WTC11 (cell line): ENCODE measurements at regions of chr5 and their contacts with region 1.

Region 1: GRCh38 chr5:96344678-96345577 is 88.1 kb downstream of the PCSK1 start:
- DNase-seq: no peak
- ATAC-seq: peak; percentile 89
- H3K4me3 Mint-ChIP-seq: no peak overlapping the region
- H3K27ac Mint-ChIP-seq: no peak overlapping the region
- H3K4me1 Mint-ChIP-seq: peaks cover 6% of the 10 kb centered on the region
- H3K27me3 Mint-ChIP-seq: no peaks in the 10 kb centered on the region
- CTCF ChIP-seq: 0 out of 2 replicates have a peak, but pooled peaks have one; percentile 19

Region 2: GRCh38 chr5:96247097-96247701 is 97.7 kb before region 1 on chr5:
- CTCF ChIA-PET with region 1: no interaction called
- POLR2A ChIA-PET with region 1: no interaction called
- DNase-seq: no peak
- ATAC-seq: peak; percentile 59
- H3K4me3 Mint-ChIP-seq: no peak overlapping the region
- H3K27ac Mint-ChIP-seq: no peak overlapping the region
- H3K4me1 Mint-ChIP-seq: peaks cover 5% of the 10 kb centered on the region
- H3K27me3 Mint-ChIP-seq: no peaks in the 10 kb centered on the region; the same call in 1 of the 2 replicates
- CTCF ChIP-seq: no peak

Region 3: DNA sequence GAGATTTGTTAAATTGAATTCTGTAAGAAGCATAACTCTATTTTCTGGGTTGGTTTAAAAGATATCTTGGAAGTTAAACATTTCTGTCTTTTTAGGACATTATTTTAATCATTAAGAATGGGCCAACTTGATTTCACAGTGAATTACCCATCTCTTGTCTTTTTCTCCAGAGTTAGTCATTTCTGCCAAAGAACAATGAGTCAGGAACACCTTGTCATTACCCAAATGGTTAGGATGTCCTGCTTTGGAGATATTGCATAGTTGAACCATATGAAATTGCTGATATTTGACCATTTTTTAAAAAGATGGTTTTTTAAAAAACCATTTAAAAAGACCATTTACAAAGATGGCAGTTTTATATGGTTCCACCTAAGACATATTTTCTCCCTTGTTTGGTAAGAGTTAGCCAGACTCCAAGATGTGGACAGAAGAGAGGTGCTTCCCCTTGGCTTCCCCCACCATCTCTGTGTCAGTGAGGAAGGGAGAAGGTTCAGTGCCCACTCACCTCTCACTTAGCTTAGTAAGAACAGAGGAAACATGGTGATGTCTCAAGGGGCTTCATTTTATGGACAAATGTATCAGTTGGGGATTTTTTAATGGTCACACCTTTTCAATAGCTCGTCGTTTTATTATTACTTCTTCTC is 14.9 kb before region 1 on chr5:
- CTCF ChIA-PET with region 1: no interaction called
- POLR2A ChIA-PET with region 1: no interaction called
- DNase-seq: no peak
- ATAC-seq: no peak
- H3K4me3 Mint-ChIP-seq: no peak overlapping the region
- H3K27ac Mint-ChIP-seq: no peak overlapping the region
- H3K4me1 Mint-ChIP-seq: peaks cover 6% of the 10 kb centered on the region; the same call in 1 of the 2 replicates
- H3K27me3 Mint-ChIP-seq: no peaks in the 10 kb centered on the region
- CTCF ChIP-seq: no peak

Region 4: GRCh38 chr5:96595300-96596090 is 250.6 kb after region 1 on chr5:
- CTCF ChIA-PET with region 1: interaction called, 44 read pairs
- POLR2A ChIA-PET with region 1: no interaction called
- DNase-seq: peak; percentile 13
- ATAC-seq: peak; percentile 95
- H3K4me3 Mint-ChIP-seq: no peak overlapping the region
- H3K27ac Mint-ChIP-seq: no peak overlapping the region
- H3K4me1 Mint-ChIP-seq: peaks cover 6% of the 10 kb centered on the region; the same call in 1 of the 2 replicates
- H3K27me3 Mint-ChIP-seq: peaks cover 3% of the 10 kb centered on the region
- CTCF ChIP-seq: peak; percentile 78

Region 5: GRCh38 chr5:96601811-96602244 is 256.9 kb after region 1 on chr5:
- CTCF ChIA-PET with region 1: interaction called, 44 read pairs
- POLR2A ChIA-PET with region 1: no interaction called
- DNase-seq: peak; percentile 19
- ATAC-seq: peak; percentile 91
- H3K4me3 Mint-ChIP-seq: no peak overlapping the region
- H3K27ac Mint-ChIP-seq: no peak overlapping the region
- H3K4me1 Mint-ChIP-seq: peaks cover 8% of the 10 kb centered on the region
- H3K27me3 Mint-ChIP-seq: peaks cover 3% of the 10 kb centered on the region
- CTCF ChIP-seq: peak; percentile 42